ENCODE measurements at regions of chr20 and their contacts with region 1.

Region 1: DNA sequence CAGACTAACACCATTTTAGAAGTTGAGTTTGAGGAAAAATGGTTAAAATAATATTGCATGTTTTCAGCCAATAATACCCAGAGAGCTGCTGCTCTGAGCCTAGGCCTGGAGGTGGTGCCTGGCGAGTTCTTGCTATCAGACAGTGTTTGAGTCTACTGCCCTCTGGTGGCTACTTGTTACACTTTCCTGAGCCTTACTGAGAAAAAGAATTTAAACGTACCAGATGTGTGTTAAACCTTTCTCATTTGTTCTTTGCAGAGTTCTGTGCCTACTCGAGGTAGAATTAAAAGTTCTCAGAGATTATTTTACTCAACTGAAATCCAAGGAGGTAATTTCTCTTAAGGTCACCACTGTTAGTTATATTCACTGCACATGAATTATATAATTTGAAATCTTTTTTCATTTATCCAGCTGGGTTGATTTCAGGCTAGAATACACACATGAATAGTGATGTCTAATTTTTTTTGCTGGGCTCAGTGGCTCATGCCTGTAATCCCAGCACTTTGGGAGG is 38.2 kb downstream of the SHLD1 start:
- DNase-seq: peak; percentile 52
- H3K4me3 ChIP-seq: no peak overlapping the region
- CTCF ChIP-seq: peak; percentile 61

Region 2: DNA sequence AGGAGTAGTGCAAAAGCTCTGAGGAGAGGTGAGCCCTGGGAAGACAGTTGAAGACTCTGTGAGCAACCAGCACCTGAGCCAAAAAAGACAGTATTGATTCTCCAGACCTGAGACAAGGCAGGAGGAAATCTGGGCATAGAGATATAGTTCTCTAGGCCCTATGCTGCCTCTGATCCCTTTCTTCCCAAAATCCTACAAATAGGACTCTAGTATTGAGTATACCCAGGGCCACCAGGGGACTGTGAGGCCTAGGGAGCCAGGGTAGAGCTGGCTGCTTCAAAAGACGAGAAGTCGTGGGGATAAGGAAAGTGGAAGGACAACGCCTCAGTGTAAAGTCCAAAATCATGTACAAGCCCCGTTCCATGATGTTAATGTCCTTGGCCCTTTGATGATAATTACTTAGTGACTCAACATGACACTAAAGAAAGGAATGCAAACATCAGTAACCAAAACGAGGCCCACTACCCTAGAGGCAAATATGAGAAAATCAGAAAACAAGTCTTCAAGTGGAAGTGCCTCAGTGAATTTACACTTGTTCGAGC is 274.4 kb before region 1 on chr20:
- CTCF ChIA-PET with region 1: no interaction called
- POLR2A ChIA-PET with region 1: no interaction called
- DNase-seq: no peak
- H3K4me3 ChIP-seq: no peak overlapping the region
- CTCF ChIP-seq: no peak

Region 3: GRCh38 chr20:5550733-5551529 is 237.5 kb before region 1 on chr20:
- CTCF ChIA-PET with region 1: interaction called, 24 read pairs
- POLR2A ChIA-PET with region 1: no interaction called
- DNase-seq: no peak
- H3K4me3 ChIP-seq: no peak overlapping the region
- CTCF ChIP-seq: no peak

Region 4: DNA sequence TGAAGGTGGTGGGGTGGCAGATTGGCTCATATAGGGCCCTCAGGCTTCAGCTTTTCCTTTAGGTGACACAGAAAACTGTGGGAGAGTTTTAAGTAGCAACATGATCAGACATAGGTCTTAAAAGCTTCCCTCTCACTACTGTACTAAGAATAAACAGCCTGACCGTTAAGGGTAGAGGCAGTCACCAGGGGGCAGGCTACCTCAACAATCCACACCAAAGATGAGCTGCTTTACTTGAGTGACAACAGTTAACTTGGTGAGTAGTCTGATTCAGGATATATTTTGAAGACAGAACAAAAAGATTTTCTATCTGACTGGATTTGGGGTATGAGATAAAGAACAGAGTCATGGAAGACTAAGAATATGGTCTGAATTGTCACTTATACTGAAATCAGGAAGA is 231.3 kb before region 1 on chr20:
- CTCF ChIA-PET with region 1: interaction called, 74 read pairs
- POLR2A ChIA-PET with region 1: no interaction called
- DNase-seq: no peak
- H3K4me3 ChIP-seq: no peak overlapping the region
- CTCF ChIP-seq: peak; percentile 58

Region 5: DNA sequence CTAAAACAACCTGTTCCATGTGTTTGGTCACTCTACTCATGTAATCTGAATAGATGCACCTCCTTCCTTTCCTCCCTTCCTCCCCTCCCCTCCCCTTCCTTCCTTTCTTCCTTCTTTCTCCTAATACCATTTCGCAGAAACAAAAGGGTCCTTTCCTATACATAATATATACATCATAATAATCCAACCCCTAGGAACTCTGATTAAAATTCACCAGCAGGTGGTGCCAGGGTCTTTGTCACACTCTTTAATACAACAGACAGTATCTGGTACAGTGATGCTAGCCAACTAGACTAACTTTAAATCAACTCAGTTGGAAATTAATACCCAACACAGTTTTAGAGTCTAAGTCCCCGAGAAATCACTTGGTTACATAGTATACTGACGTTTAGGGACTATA is 219.4 kb before region 1 on chr20:
- CTCF ChIA-PET with region 1: interaction called, 94 read pairs
- POLR2A ChIA-PET with region 1: no interaction called
- DNase-seq: no peak
- H3K4me3 ChIP-seq: no peak overlapping the region
- CTCF ChIP-seq: peak; percentile 7

Region 6: DNA sequence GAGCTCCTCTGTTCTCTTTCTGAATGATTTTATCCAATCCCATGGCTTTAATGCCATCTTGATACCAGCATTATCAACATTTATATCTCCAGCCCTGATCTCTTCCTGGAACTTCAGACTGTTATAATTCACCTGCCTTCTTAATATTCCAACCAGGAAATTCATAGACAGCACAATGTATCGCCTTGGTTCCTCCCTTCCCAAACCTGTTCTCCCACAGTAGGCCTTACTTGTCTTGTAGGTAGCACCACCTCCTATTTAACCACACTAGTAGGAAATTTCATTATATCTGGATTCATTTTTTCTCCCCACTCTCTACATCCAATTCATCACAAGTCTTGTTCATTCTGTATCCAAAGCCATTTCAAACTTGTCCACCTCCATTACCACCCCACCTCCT is 144.5 kb before region 1 on chr20:
- CTCF ChIA-PET with region 1: no interaction called
- POLR2A ChIA-PET with region 1: no interaction called
- DNase-seq: no peak
- H3K4me3 ChIP-seq: no peak overlapping the region
- CTCF ChIP-seq: no peak

Region 7: DNA sequence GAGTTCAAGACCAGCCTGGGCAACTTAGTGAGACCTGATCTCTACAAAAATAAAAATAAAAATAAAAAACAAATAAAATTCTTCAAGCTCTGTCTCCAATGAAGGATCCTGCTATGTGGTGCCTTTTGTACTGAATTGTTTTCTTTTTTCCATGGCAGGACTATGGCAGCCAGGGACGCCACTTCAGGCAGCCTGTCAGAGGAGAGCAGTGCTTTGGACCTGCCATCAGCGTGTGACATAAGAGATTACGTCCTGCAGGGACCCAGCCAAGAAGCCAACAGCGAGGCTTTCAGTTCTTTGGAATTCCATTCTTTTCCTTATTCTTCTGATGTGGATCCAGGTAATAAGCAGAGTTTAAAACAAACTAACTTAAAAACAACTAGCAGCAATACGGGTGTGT is 15.7 kb before region 1 on chr20:
- CTCF ChIA-PET with region 1: interaction called, 10 read pairs
- POLR2A ChIA-PET with region 1: no interaction called
- DNase-seq: no peak
- H3K4me3 ChIP-seq: no peak overlapping the region
- CTCF ChIP-seq: no peak

Region 8: DNA sequence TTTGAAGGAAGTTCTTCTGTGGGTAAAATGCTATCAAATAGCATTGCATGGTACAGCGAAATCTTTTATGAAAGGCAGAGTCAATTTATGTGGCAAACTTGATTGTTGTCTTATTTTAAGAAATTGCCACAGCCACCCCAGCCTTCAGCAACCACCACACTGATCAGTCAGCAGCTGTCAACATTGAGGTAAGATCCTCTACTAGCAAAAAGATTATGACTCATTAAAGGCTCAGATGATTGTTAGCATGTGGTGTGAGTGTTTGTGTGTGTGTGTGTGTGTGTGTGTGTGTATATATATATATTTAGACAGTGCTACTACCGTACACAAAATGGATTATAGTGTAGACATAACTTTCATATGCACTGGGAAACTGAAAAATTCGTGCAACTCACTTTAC is 237.6 kb after region 1 on chr20:
- CTCF ChIA-PET with region 1: no interaction called
- POLR2A ChIA-PET with region 1: no interaction called
- DNase-seq: no peak
- H3K4me3 ChIP-seq: no peak overlapping the region
- CTCF ChIP-seq: no peak

Region 9: GRCh38 chr20:6081236-6081635 is 292.8 kb after region 1 on chr20:
- CTCF ChIA-PET with region 1: interaction called, 12 read pairs
- POLR2A ChIA-PET with region 1: no interaction called
- DNase-seq: no peak
- H3K4me3 ChIP-seq: no peak overlapping the region
- CTCF ChIP-seq: no peak

Measured in AG04449 (cell line).